MCF 10A (cell line): ENCODE measurements at regions of chr19 and their contacts with region 1.

Region 1: DNA sequence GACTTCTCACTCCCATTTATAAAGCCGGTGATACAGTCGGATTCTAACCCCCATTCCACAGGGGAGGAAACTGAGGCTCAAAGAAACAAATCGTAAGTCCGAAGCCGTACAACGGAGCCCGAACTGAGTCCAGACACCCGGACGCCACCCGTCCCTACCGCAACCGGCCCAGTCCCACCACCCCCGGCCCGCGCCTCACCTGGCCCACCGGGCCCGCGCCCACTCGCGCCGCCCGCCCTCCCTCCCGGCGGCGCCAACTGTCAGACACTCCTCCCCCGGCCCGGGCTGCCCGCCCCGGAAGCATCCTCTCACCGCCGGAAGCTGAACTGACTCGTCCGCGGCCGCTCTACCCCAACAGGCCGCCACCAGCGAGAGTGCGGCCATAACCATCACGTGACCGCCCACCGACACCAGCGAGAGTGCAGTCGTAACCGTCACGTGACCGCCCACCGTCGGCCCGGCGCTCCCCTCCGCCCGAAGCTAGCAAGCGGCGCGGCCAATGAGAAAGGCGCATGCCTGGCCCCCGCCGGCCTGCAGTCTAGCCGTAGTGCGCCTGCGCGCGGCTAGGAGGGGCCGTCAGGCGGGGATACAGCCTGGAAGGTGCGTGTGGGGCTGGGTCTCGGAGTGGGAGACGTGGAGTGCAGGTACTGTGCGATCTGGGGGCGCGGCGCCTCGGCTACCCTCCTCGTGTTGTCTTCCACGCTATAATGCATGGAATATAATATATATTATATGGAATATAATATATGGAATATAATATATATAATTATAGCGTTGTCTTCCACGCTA is at the starts of genes C19orf47 and PLD3:
- DNase-seq: peak; percentile 99
- H3K4me3 Mint-ChIP-seq: peak within 1 kb of the TSS; percentile 99
- H3K27ac Mint-ChIP-seq: peak within 1 kb of the TSS; percentile 95
- H3K4me1 Mint-ChIP-seq: peaks cover 17% of the 10 kb centered on the region
- H3K27me3 Mint-ChIP-seq: no peaks in the 10 kb centered on the region
- CTCF ChIP-seq: no peak
- total RNA-seq, gene C19orf47: 14.9 and 16.1 TPM in 2 replicates
- total RNA-seq, gene PLD3: 98.9 and 130 TPM in 2 replicates

Region 2: GRCh38 chr19:40331069-40331468 is 17.2 kb before region 1 on chr19:
- CTCF ChIA-PET with region 1: no interaction called
- POLR2A ChIA-PET with region 1: interaction called, 21 read pairs
- intact Hi-C with region 1: no loop called
- DNase-seq: peak; percentile 76
- H3K4me3 Mint-ChIP-seq: no peak overlapping the region
- H3K27ac Mint-ChIP-seq: peak overlapping the region; percentile 85
- H3K4me1 Mint-ChIP-seq: peaks cover 6% of the 10 kb centered on the region
- H3K27me3 Mint-ChIP-seq: no peaks in the 10 kb centered on the region
- CTCF ChIP-seq: no peak